Activated B cell treated with CpG ODN at 0.5 μM for 24 hours (primary cell): ENCODE measurements at regions of chrX and their contacts with region 1.

Region 1: DNA sequence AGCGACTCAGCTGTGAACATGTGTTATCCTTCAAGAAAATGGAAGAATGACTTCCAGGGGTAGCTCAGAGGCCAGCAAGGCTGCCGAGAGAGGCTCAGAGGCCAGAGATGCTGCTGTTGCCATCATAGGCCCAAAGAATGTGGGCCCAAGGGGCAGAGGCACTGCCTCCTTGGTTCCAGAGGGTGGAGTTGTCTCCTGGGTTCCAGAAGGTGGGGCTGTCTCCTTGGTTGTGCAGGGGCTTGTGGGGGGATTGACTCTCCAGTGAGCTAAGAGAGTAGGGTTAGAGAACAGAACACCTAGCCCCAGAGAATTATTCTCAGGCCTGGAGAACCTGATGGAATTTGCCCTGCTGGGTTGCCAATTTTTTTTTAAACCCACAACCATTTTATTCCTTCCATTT is 62.6 kb downstream of the DGKK start:
- DNase-seq: no peak
- ATAC-seq: no peak
- H3K4me3 Mint-ChIP-seq: no peak overlapping the region
- H3K27ac Mint-ChIP-seq: no peak overlapping the region
- H3K4me1 Mint-ChIP-seq: no peaks in the 10 kb centered on the region
- H3K27me3 Mint-ChIP-seq: no peaks in the 10 kb centered on the region
- CTCF ChIP-seq: no peak

Region 2: GRCh38 chrX:50448565-50448964 is 40.6 kb after region 1 on chrX:
- CTCF ChIA-PET with region 1: no interaction called
- POLR2A ChIA-PET with region 1: no interaction called
- intact Hi-C with region 1: no loop called
- DNase-seq: no peak
- ATAC-seq: no peak
- H3K4me3 Mint-ChIP-seq: no peak overlapping the region
- H3K27ac Mint-ChIP-seq: no peak overlapping the region
- H3K4me1 Mint-ChIP-seq: no peaks in the 10 kb centered on the region
- H3K27me3 Mint-ChIP-seq: peaks cover 2% of the 10 kb centered on the region
- CTCF ChIP-seq: no peak

Region 3: DNA sequence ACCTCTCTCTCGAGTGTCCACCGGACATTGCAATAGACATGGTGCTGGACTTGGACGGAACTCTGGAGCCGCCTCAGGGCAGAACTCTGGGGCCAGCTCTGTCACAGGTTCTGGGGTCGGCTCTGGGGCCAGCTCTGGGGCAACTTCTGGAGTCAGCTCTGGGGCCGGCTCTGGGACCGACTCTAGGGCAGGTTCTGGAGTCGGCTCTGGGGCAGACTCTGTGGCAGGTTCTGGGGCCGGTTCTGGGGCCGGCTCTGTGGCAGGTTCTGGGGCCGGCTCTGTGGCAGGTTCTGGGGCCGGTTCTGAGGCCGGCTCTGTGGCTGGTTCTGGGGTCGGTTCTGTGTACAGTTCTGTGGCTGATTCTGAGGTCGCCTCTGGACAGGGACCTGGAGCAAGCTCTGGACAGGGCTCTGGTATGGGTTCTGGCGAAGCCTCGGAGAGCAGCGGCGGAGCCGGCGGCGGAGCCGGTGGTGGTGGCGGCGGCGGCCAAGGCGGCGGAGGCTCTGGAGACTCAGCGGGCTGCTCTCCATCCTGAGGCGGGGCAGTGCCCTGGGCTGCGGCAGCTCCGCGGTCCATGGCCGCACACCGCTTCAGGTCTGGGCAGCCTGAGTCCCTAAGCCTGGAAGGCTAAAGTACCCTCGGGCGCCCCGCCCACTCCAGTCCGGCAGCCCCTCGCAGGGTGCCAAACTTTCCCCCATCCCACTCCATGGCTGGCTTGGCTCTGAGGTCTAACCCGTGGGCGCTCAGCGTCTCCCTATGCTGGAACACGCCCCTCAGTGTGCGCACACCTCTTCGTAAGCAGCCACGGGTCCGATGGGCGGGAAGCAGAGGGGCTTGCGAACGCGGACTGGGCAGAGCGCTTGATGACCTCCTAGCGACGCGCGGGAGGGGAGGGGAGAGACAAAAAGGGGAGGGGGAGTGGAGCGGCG is 62.4 kb after region 1 on chrX and contains the start of gene DGKK:
- CTCF ChIA-PET with region 1: no interaction called
- POLR2A ChIA-PET with region 1: no interaction called
- intact Hi-C with region 1: loop called (anchors 10 kb)
- DNase-seq: no peak
- ATAC-seq: no peak
- H3K4me3 Mint-ChIP-seq: no peak within 1 kb of the TSS
- H3K27ac Mint-ChIP-seq: no peak within 1 kb of the TSS
- H3K4me1 Mint-ChIP-seq: no peaks in the 10 kb centered on the region
- H3K27me3 Mint-ChIP-seq: peaks cover 20% of the 10 kb centered on the region
- CTCF ChIP-seq: no peak
- total RNA-seq, gene DGKK: not detected in 2 replicates